ENCODE measurements at regions of chr5 and their contacts with region 1.

Region 1: GRCh38 chr5:139765409-139766217 is 30.0 kb upstream of the PSD2 start:
- DNase-seq: peak; percentile 76
- H3K4me3 ChIP-seq: peak overlapping the region; percentile 37 to 49 (median 40)
- H3K27ac ChIP-seq: no peak overlapping the region
- H3K4me1 ChIP-seq: peaks cover 21% of the 10 kb centered on the region
- H3K27me3 ChIP-seq: peaks cover 12 to 14% of the 10 kb centered on the region in 2 experiments
- CTCF ChIP-seq: peak in 1 of 2 donors; percentile 83
- POLR2A ChIP-seq: no peak

Region 2: GRCh38 chr5:138878437-138879235 is 887.0 kb before region 1 on chr5:
- CTCF ChIA-PET with region 1: no interaction called
- POLR2A ChIA-PET with region 1: no interaction called
- dilution Hi-C with region 1: no loop called
- intact Hi-C with region 1: no loop called
- DNase-seq: no peak
- H3K4me3 ChIP-seq: no peak overlapping the region
- H3K27ac ChIP-seq: no peak overlapping the region
- H3K4me1 ChIP-seq: peaks cover 8% of the 10 kb centered on the region
- H3K27me3 ChIP-seq: no peaks in the 10 kb centered on the region
- CTCF ChIP-seq: no peak
- POLR2A ChIP-seq: no peak

Region 3: GRCh38 chr5:139651853-139652787 is 113.5 kb before region 1 on chr5:
- CTCF ChIA-PET with region 1: interaction called, 49 read pairs
- POLR2A ChIA-PET with region 1: no interaction called
- dilution Hi-C with region 1: loop called (anchors 10 kb)
- intact Hi-C with region 1: no loop called
- DNase-seq: peak; percentile 73
- H3K4me3 ChIP-seq: no peak overlapping the region
- H3K27ac ChIP-seq: no peak overlapping the region
- H3K4me1 ChIP-seq: peaks cover 29% of the 10 kb centered on the region
- H3K27me3 ChIP-seq: peaks cover 5 to 24% of the 10 kb centered on the region in 2 experiments
- CTCF ChIP-seq: no peak
- POLR2A ChIP-seq: no peak

Region 4: DNA sequence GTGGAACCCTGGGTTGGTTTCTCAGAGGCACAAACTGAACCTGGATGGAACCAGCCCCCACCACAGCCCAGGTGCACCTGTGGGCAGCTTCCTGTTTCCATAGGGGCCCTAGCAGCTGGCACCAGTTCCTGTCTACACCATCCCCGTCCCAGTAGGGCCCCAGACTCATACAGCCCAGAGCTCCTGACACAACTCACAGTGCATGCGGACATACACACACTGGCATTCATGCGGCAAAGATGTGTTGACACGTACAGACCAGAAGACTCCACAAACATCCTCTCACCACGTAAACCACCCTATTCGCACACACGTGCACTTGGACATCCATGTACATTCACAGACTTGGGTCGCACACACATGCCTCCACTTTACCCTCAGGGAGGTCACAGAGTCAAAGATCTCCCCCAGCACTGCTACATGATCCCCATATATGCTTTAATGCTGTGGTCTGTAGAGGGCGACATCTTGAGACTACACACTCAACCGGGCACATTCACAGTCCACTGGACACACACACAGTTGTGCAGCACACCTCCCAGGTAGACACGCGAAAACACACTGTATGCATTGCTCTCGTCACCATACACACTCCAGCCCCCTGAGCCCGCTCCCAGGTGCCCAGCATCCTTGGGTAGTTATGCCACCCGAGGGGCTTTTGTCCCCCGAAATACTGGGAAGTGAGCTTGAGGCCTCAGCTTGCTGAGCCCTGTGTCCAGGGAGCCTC is 95.1 kb before region 1 on chr5:
- CTCF ChIA-PET with region 1: interaction called, 14 read pairs
- POLR2A ChIA-PET with region 1: no interaction called
- dilution Hi-C with region 1: no loop called
- intact Hi-C with region 1: no loop called
- DNase-seq: peak; percentile 33
- H3K4me3 ChIP-seq: no peak overlapping the region
- H3K27ac ChIP-seq: no peak overlapping the region
- H3K4me1 ChIP-seq: peaks cover 32% of the 10 kb centered on the region
- H3K27me3 ChIP-seq: no peaks in the 10 kb centered on the region
- CTCF ChIP-seq: peak; percentile 27 to 43
- POLR2A ChIP-seq: no peak

Region 5: GRCh38 chr5:139690064-139690802 is 75.4 kb before region 1 on chr5:
- CTCF ChIA-PET with region 1: interaction called, 24 read pairs
- POLR2A ChIA-PET with region 1: no interaction called
- dilution Hi-C with region 1: no loop called
- intact Hi-C with region 1: loop called (anchors 5 kb)
- DNase-seq: peak; percentile 53
- H3K4me3 ChIP-seq: no peak overlapping the region
- H3K27ac ChIP-seq: no peak overlapping the region
- H3K4me1 ChIP-seq: no peaks in the 10 kb centered on the region
- H3K27me3 ChIP-seq: no peaks in the 10 kb centered on the region
- CTCF ChIP-seq: peak; percentile 42 to 46
- POLR2A ChIP-seq: no peak

Region 6: GRCh38 chr5:139711067-139711905 is 54.3 kb before region 1 on chr5:
- CTCF ChIA-PET with region 1: interaction called, 27 read pairs
- POLR2A ChIA-PET with region 1: no interaction called
- dilution Hi-C with region 1: no loop called
- intact Hi-C with region 1: no loop called
- DNase-seq: no peak
- H3K4me3 ChIP-seq: peak overlapping the region in 1 of 3 experiments; percentile 20
- H3K27ac ChIP-seq: no peak overlapping the region
- H3K4me1 ChIP-seq: peaks cover 7% of the 10 kb centered on the region
- H3K27me3 ChIP-seq: peaks cover 11 to 13% of the 10 kb centered on the region in 2 experiments
- CTCF ChIP-seq: peak in 1 of 2 donors; percentile 12
- POLR2A ChIP-seq: no peak